WTC11 (cell line): ENCODE measurements at regions of chr1 and their contacts with region 1.

Region 1: DNA sequence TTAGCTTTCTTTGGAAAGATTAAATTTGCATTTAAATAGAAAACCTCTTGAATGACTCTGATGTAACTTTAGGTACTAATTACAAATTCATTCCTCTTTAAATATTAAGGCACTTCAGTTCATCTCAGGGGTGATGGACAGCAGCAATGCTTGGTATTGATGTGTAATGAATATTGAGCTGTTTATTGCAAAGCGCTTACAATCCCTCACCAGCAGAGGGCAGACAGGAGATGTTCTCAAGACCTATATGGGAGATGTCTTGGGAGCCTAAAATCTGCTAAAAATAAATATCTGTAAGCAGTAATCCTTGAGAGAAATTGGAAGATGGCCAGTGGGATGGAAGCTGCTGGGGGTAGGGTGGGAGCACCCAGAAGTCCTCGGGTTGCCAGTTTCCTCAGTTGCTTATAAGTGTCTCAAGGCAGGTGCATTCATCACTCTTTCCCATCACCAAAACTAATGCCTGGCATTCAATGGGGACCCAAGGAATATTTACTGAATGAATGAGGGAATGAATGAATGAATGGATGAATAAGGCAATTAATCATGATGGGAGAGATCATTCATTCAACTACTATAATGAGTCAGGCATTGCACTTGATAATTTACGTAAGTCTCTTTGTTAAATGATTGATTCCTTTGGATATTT is 2.3 kb downstream of the KLHDC8A start:
- DNase-seq: peak; percentile 68
- ATAC-seq: no peak
- H3K4me3 Mint-ChIP-seq: no peak overlapping the region
- H3K27ac Mint-ChIP-seq: no peak overlapping the region
- H3K4me1 Mint-ChIP-seq: peaks cover 79% of the 10 kb centered on the region
- H3K27me3 Mint-ChIP-seq: no peaks in the 10 kb centered on the region; the same call in 1 of the 2 replicates
- CTCF ChIP-seq: peak; percentile 83

Region 2: GRCh38 chr1:204685236-204686006 is 669.0 kb before region 1 on chr1 and contains the start of gene LRRN2:
- CTCF ChIA-PET with region 1: no interaction called
- POLR2A ChIA-PET with region 1: no interaction called
- DNase-seq: peak; percentile 42
- ATAC-seq: peak; percentile 33
- H3K4me3 Mint-ChIP-seq: peak within 1 kb of the TSS; percentile 85
- H3K27ac Mint-ChIP-seq: no peak within 1 kb of the TSS; the same call in 1 of the 2 replicates
- H3K4me1 Mint-ChIP-seq: peaks cover 26% of the 10 kb centered on the region
- H3K27me3 Mint-ChIP-seq: peaks cover 65% of the 10 kb centered on the region
- CTCF ChIP-seq: no peak
- total RNA-seq, gene LRRN2: 3.2 to 5.3 TPM (median 3.4 TPM) in 3 replicates

Region 3: DNA sequence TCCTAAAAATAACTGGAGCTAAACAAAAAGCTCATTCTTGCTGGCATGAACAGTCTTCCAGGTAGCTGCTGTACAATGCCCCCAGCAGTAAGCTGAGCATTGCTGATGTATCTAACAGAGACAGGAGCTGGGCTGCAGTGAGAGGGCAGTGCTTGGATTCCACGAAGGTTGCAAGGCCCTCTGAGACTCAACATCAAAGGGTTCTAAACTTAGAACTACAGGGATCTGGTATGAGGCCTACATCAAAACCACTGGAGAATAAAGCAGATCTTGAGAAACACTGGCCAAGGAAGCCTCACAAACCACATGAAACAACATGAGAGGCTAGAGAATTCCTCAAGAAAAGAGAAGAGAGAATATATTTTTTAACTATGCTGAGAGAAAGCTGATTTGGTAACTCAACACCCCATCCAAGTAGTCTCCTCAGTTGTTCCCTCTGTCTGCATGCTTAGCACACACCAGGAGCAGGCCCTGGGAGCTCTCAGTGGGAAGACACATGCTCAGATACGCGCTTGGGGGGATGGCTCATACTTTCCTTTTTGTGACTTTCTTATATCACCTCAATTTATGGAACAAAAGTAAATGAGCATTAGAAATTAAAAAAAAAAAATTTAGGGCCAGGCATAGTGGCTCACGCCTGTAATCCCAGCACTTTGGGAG is 170.6 kb before region 1 on chr1:
- CTCF ChIA-PET with region 1: no interaction called
- POLR2A ChIA-PET with region 1: no interaction called
- DNase-seq: no peak
- ATAC-seq: no peak
- H3K4me3 Mint-ChIP-seq: no peak overlapping the region
- H3K27ac Mint-ChIP-seq: peak overlapping the region; percentile 84
- H3K4me1 Mint-ChIP-seq: peaks cover 24% of the 10 kb centered on the region
- H3K27me3 Mint-ChIP-seq: no peaks in the 10 kb centered on the region
- CTCF ChIP-seq: no peak

Region 4: GRCh38 chr1:205211169-205211838 is 143.1 kb before region 1 on chr1 and contains the start of gene DSTYK:
- CTCF ChIA-PET with region 1: no interaction called
- POLR2A ChIA-PET with region 1: no interaction called
- DNase-seq: peak; percentile 97
- ATAC-seq: peak; percentile 91
- H3K4me3 Mint-ChIP-seq: peak within 1 kb of the TSS; percentile 88
- H3K27ac Mint-ChIP-seq: peak within 1 kb of the TSS; percentile 93
- H3K4me1 Mint-ChIP-seq: peaks cover 23% of the 10 kb centered on the region
- H3K27me3 Mint-ChIP-seq: no peaks in the 10 kb centered on the region
- CTCF ChIP-seq: no peak
- total RNA-seq, gene DSTYK: 10.3 to 11.6 TPM (median 11.0 TPM) in 3 replicates

Region 5: DNA sequence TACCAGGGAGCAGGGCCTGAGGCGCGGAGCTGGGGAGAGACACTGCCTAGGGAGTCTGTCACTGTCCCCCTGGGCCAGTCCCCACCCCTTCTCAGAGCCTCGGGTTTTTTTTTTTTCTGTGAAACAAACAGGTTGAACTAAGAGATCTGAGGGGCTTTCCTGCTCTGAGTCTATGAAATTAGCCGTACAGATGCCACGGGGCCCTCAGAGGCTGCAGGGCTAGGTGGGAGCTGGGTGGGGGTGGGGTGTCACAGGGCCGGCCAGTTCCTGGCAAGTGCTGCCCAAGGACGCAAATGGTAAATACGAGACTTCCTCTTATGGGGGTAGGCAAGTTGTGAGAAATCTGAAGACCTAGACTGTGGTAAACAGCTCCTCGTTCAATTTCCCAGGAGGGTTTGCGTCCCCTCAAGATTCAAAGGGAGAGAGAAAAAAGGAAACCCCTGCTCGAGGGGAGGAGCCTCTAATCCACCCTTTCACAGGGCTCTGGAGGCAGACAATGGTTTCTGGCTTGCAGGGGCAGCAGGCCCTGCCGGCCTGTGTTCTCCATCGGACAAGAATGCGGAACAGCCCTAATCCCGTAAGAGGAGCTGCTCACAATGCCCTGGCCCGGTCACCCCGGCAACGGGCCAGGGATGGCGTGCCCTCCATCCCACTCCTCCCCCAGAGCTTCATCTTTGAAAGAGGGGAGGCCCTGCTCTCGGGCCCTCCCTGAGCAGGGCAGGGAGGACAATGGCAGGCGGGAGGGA is 40.6 kb before region 1 on chr1:
- CTCF ChIA-PET with region 1: interaction called, 13 read pairs
- POLR2A ChIA-PET with region 1: interaction called, 6 read pairs
- DNase-seq: peak; percentile 82
- ATAC-seq: peak; percentile 94
- H3K4me3 Mint-ChIP-seq: peak overlapping the region; percentile 54
- H3K27ac Mint-ChIP-seq: peak overlapping the region; percentile 99
- H3K4me1 Mint-ChIP-seq: peaks cover 70% of the 10 kb centered on the region
- H3K27me3 Mint-ChIP-seq: no peaks in the 10 kb centered on the region; the same call in none of the 2 replicates
- CTCF ChIP-seq: no peak

Region 6: DNA sequence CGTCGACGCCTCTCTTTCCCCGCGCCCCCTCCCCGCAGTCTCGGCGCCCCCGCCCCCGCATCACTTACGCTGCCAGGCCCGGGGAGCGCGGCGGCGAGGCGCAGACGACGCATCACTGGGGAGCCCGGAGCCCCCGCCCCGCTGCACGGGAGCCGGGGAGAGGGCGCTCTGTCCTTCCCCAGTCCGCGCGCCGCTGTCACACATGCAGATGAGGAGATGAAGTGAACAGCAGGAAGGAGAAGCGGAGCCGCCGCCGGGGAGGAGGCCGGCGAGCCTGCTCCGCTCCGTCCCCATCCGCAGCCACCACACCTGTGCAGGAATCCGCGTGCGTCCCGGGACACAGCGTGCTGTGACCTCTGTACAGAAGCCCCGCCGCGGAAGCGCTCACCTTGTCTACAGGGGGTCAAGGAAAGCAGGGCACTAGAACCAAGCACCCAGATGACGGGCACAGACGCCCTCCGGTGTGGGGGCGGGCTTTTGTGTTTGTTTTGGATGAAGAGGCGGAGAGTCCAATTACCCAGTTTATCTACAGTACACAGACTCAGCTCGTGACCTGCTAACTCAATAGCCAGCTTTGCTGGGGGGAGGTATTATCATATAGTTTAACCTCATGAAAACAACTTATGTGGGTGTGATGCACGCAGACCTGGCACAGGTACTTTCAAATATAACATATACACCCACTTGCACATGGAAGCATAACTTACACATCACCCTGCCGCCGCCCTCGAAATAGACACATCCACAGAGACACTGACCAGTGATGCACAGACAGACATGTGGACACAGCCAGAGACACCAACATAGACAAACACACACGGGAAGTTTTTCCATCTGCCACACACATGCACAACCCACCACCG is 10.1 kb before region 1 on chr1:
- CTCF ChIA-PET with region 1: interaction called, 20 read pairs
- POLR2A ChIA-PET with region 1: no interaction called
- DNase-seq: peak; percentile 66
- ATAC-seq: peak; percentile 57
- H3K4me3 Mint-ChIP-seq: peak overlapping the region; percentile 72
- H3K27ac Mint-ChIP-seq: no peak overlapping the region
- H3K4me1 Mint-ChIP-seq: peaks cover 33% of the 10 kb centered on the region
- H3K27me3 Mint-ChIP-seq: peaks cover 55% of the 10 kb centered on the region
- CTCF ChIP-seq: no peak

Region 7: GRCh38 chr1:205387845-205388244 is 33.5 kb after region 1 on chr1:
- CTCF ChIA-PET with region 1: interaction called, 28 read pairs
- POLR2A ChIA-PET with region 1: no interaction called
- DNase-seq: no peak
- ATAC-seq: no peak
- H3K4me3 Mint-ChIP-seq: no peak overlapping the region
- H3K27ac Mint-ChIP-seq: no peak overlapping the region
- H3K4me1 Mint-ChIP-seq: no peaks in the 10 kb centered on the region
- H3K27me3 Mint-ChIP-seq: no peaks in the 10 kb centered on the region
- CTCF ChIP-seq: no peak

Region 8: GRCh38 chr1:205449750-205450443 is 95.5 kb after region 1 on chr1:
- CTCF ChIA-PET with region 1: interaction called, 24 read pairs
- POLR2A ChIA-PET with region 1: no interaction called
- DNase-seq: peak; percentile 74
- ATAC-seq: peak; percentile 13
- H3K4me3 Mint-ChIP-seq: peak overlapping the region; percentile 74
- H3K27ac Mint-ChIP-seq: peak overlapping the region; percentile 72
- H3K4me1 Mint-ChIP-seq: peaks cover 93% of the 10 kb centered on the region
- H3K27me3 Mint-ChIP-seq: peaks cover 13% of the 10 kb centered on the region
- CTCF ChIP-seq: no peak

Region 9: GRCh38 chr1:205504311-205504984 is 150.1 kb after region 1 on chr1 and contains the start of gene CDK18:
- CTCF ChIA-PET with region 1: interaction called, 17 read pairs
- POLR2A ChIA-PET with region 1: no interaction called
- DNase-seq: peak; percentile 85
- ATAC-seq: peak; percentile 80
- H3K4me3 Mint-ChIP-seq: peak within 1 kb of the TSS; percentile 85
- H3K27ac Mint-ChIP-seq: peak within 1 kb of the TSS; percentile 19; the same call in 1 of the 2 replicates
- H3K4me1 Mint-ChIP-seq: peaks cover 57% of the 10 kb centered on the region
- H3K27me3 Mint-ChIP-seq: no peaks in the 10 kb centered on the region
- CTCF ChIP-seq: no peak
- total RNA-seq, gene CDK18: 62.1 to 71.9 TPM (median 64.7 TPM) in 3 replicates

Region 10: GRCh38 chr1:205669341-205670149 is 315.2 kb after region 1 on chr1:
- CTCF ChIA-PET with region 1: no interaction called
- POLR2A ChIA-PET with region 1: no interaction called
- DNase-seq: no peak
- ATAC-seq: no peak
- H3K4me3 Mint-ChIP-seq: peak overlapping the region; percentile 10
- H3K27ac Mint-ChIP-seq: no peak overlapping the region
- H3K4me1 Mint-ChIP-seq: peaks cover 68% of the 10 kb centered on the region
- H3K27me3 Mint-ChIP-seq: no peaks in the 10 kb centered on the region
- CTCF ChIP-seq: no peak